A549 (cell line): ENCODE measurements at regions of chr9 and their contacts with region 1.

Region 1: DNA sequence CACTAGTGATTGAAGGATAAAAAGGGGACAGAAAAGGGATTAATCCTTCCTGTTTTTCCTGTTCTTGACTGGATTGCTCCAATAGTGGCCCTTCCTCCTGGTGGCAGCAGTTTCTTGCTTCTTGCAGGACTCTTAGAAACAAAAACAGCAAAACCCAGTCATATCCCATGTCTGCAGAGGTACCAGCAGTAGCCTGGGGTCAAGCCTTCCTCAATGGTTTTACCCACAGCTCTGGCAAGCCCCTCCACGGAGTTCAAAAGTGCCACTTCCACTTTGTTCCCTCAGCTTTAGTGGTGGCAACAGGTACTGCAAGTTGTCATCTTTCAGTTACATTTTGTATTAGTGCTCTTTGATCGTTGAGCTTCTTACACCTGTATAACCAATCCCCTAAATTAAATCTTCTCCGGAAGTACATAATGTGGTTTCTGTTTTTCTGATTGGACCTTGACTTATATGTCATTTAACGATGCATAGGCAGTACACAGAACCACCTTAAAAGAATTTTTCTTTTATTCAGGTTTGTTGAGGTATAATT is 8.7 kb upstream of the RANBP6 start:
- DNase-seq: peak; percentile 35 to 48
- ATAC-seq: peak; percentile 84 to 90
- H3K4me3 ChIP-seq: no peak overlapping the region
- H3K27ac ChIP-seq: peak overlapping the region in 1 of 2 experiments; percentile 63; a peak in 2 of 6 replicates
- H3K4me1 ChIP-seq: 0 out of 3 replicates have a peak, but pooled peaks cover under 1% of the 10 kb centered on the region
- CTCF ChIP-seq: peak; percentile 37; the same call in 2 of the 3 replicates
- EP300 ChIP-seq: no peak
- POLR2A ChIP-seq: no peak
- RAD21 ChIP-seq: no peak

Region 2: DNA sequence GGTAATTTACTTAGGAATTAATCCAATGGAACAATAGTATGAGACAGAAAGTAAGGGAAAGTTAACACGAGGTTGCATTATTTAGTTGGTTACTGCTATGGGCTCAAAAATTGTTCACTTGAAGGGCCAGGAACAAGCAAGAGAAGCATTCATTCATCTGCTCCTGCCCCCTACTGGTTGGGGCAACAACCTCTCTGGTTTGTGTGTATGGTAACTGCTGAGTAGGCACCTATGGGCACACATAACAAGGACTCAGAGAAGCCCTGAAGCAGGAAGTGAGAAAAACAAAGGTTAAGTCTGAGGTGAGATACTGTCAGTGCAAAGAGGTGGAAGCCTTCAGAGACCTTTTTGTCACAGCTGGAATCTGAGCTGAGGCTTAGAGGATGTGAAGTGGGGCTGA is 25.7 kb after region 1 on chr9:
- CTCF ChIA-PET with region 1: interaction called, 23 read pairs
- POLR2A ChIA-PET with region 1: no interaction called
- DNase-seq: peak in 1 of 2 experiments; percentile 59
- ATAC-seq: peak in 1 of 2 experiments; percentile 46; a peak in 3 of 6 replicates
- H3K4me3 ChIP-seq: no peak overlapping the region
- H3K27ac ChIP-seq: no peak overlapping the region
- H3K4me1 ChIP-seq: no peaks in the 10 kb centered on the region
- CTCF ChIP-seq: peak; percentile 24; the same call in 1 of the 3 replicates
- EP300 ChIP-seq: no peak
- POLR2A ChIP-seq: no peak
- RAD21 ChIP-seq: peak in 1 of 2 experiments; percentile 45; a peak in 2 of 5 replicates